ENCODE measurements at regions of chr19 and their contacts with region 1.

Region 1: DNA sequence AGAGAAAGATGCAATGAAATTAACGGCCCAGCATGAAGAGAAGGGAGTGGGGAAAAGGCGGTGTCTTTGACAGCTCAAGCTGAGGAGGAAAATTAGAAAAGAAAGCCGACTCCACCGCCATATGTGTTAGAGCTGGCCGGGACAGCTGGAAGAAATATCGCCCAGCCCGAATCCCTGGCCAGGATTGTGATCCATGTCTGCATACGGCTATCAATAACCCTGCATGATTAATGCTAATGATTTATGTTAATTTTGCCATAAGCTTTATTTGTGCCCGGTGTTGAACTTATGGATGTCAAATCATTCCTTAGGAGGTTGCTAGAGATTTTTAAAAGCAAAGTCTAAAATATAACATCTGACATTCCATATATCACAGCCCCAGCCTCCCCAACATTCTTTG is 263.4 kb upstream of the ZNF507 start:
- DNase-seq: no peak

Region 2: GRCh38 chr19:31976775-31977536 is 105.1 kb before region 1 on chr19:
- intact Hi-C with region 1: no loop called
- DNase-seq: no peak

Region 3: GRCh38 chr19:32053376-32053775 is 28.7 kb before region 1 on chr19:
- intact Hi-C with region 1: loop called in 1 of 2 experiments (anchors 2 kb)
- DNase-seq: no peak

Region 4: DNA sequence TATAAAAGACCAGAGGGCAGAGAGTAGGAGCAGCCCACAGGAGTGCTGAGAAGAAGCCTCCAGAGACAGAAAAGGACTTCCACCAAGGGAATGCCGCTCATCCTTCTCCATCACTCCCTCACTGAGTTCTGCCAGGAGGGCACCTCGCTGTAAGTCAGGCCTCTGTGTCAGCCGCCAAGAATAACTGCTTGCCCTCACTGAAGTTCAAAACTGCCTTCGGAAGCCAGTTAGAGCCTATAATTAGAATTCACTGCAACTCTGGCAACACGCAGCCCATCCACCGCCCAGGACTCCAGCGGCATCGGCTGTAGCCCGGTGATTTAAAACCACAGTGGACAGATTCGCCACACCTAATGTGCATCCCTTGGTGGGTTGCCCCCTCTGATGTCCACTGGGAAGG is 18.4 kb before region 1 on chr19:
- intact Hi-C with region 1: no loop called
- DNase-seq: no peak

Region 5: DNA sequence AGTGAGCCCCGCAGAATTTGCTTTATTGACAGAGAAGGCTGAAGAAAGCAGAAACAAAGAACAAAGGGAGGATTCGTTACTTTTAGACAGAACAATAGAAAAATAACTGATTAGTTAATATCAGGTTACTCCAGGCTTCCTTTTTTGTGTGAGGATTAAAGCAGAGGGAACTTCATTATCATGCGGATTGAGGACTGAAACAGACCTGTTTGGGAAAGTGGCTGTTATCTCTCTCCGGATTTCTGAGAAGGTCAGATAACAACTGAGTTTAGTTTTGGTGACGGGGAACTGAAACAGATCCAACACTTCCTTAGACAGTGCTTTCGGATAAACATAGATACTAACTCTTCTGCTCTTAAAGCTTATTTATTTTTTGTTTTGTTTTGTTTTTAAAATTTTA is 16.9 kb after region 1 on chr19:
- intact Hi-C with region 1: no loop called
- DNase-seq: no peak

Measured in posterior vena cava (tissue), 2 donors.